ENCODE measurements at regions of chr22 and their contacts with region 1.

Region 1: GRCh38 chr22:32378707-32379272 is 21.1 kb downstream of the RFPL3 start:
- DNase-seq: peak; percentile 38
- ATAC-seq: no peak
- H3K4me3 Mint-ChIP-seq: no peak overlapping the region
- H3K27ac Mint-ChIP-seq: no peak overlapping the region
- H3K4me1 Mint-ChIP-seq: no peaks in the 10 kb centered on the region
- H3K27me3 Mint-ChIP-seq: no peaks in the 10 kb centered on the region

Region 2: DNA sequence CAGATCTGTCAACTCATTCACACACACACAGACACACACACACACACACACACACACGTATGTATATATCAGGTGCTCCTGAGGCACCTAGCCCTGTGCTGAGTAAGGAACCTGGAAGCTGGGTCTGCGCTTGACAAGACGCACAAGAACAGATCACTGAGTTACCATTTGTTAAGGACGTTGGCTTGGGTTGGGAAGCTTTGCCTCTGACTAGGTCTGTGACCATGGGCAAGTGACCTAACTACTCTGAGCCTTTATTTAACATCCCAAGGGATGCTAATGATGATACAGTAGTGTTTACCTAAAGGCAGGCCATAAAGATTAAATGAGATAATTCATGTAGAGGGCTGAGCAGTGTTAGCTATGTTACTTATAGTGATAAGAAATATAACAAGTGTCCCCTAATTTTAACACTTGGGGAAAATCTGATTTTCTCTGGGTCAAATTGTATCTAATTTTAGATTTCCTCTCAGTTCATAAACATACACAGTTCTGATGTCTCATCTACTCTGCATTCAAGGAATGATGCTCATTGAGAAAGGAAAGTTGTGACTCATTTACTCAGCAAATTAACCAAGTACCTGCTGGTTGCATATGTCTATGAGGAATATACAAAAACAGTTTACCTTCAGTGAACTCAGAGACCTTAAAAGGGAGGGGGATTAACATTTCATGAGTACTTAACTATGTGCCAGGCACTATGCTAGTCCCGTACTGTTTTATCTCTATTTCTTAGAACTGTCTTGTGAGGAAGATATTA is 1205.2 kb before region 1 on chr22:
- CTCF ChIA-PET with region 1: no interaction called
- POLR2A ChIA-PET with region 1: no interaction called
- intact Hi-C with region 1: no loop called
- DNase-seq: peak; percentile 16
- ATAC-seq: peak; percentile 94
- H3K4me3 Mint-ChIP-seq: peak overlapping the region; percentile 29
- H3K27ac Mint-ChIP-seq: peak overlapping the region; percentile 80
- H3K4me1 Mint-ChIP-seq: peaks cover 41% of the 10 kb centered on the region
- H3K27me3 Mint-ChIP-seq: no peaks in the 10 kb centered on the region

Region 3: DNA sequence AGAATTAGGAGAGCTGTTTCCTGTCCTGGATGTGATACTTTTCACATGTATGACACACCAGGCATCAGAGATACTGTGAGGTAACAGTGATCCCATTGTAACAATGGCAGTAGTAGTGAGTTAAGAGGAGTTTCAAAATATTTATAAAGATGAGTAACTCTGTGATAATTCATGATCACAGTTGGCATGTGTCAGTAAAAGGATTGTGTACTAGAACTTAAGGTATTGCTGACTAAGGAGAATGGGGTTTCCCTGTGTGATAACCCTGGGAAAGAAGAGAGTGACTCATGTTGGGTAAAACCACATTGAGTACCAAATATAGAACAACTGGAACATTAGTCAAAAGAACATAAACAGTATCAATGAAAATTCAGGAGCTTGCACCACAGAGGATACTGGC is 358.7 kb before region 1 on chr22:
- CTCF ChIA-PET with region 1: no interaction called
- POLR2A ChIA-PET with region 1: no interaction called
- intact Hi-C with region 1: loop called in 1 of 2 experiments (anchors 5 kb)
- DNase-seq: no peak
- ATAC-seq: peak; percentile 86
- H3K4me3 Mint-ChIP-seq: no peak overlapping the region
- H3K27ac Mint-ChIP-seq: no peak overlapping the region
- H3K4me1 Mint-ChIP-seq: peaks cover 8% of the 10 kb centered on the region
- H3K27me3 Mint-ChIP-seq: peaks cover 26% of the 10 kb centered on the region